Left ventricle myocardium superior (tissue), 1 donor: ENCODE measurements at regions of chr15 and their contacts with region 1.

Region 1: DNA sequence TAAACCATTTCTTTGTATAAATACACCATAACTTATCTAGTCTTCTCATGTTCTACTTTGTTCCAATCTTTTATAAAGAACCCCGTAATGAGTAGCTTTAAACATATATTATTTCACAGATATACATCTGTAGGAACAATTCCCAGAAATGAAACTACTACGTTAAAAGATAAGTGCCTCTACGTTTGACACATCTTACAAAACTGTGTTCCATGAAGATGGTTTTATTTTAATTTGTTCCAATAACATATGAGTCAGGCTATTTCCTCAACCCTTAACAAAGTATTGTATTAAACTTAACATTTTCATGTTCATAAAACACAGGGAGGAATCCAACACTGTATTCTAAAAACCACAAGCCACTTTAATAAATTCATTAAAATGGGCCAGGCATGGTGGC is 52.9 kb downstream of the TRPM7 start:
- DNase-seq: no peak
- ATAC-seq: no peak

Region 2: GRCh38 chr15:50576166-50576565 is 57.5 kb before region 1 on chr15:
- intact Hi-C with region 1: loop called (anchors 10 kb)
- DNase-seq: no peak
- ATAC-seq: no peak